HepG2 (cell line): ENCODE measurements at regions of chr22 and their contacts with region 1.

Region 1: GRCh38 chr22:23539135-23539838 is 40.8 kb downstream of the IGLL1 start:
- DNase-seq: peak; percentile 79
- ATAC-seq: peak; percentile 85
- H3K4me3 ChIP-seq: peak overlapping the region in 1 of 3 experiments; percentile 25; a peak in 2 of 6 replicates
- H3K27ac ChIP-seq: no peak overlapping the region
- H3K4me1 ChIP-seq: peaks cover 60% of the 10 kb centered on the region
- H3K27me3 ChIP-seq: 0 out of 5 replicates have a peak, but pooled peaks cover 0 to under 1% of the 10 kb centered on the region in 2 experiments
- CTCF ChIP-seq: peak; percentile 98
- EP300 ChIP-seq: no peak
- POLR2A ChIP-seq: no peak
- RAD21 ChIP-seq: peak; percentile 99

Region 2: GRCh38 chr22:23322547-23322946 is 216.7 kb before region 1 on chr22:
- CTCF ChIA-PET with region 1: no interaction called
- POLR2A ChIA-PET with region 1: no interaction called
- in situ Hi-C with region 1: no loop called
- intact Hi-C with region 1: loop called (anchors 1 kb)
- DNase-seq: peak; percentile 43
- ATAC-seq: peak; percentile 57; the same call in 2 of the 3 replicates
- H3K4me3 ChIP-seq: no peak overlapping the region
- H3K27ac ChIP-seq: no peak overlapping the region
- H3K4me1 ChIP-seq: peaks cover 6% of the 10 kb centered on the region; the same call in 1 of the 2 replicates
- H3K27me3 ChIP-seq: no peaks in the 10 kb centered on the region
- CTCF ChIP-seq: peak; percentile 55
- EP300 ChIP-seq: no peak
- POLR2A ChIP-seq: no peak
- RAD21 ChIP-seq: no peak

Region 3: GRCh38 chr22:23385291-23386244 is 153.7 kb before region 1 on chr22:
- CTCF ChIA-PET with region 1: interaction called, 3 read pairs
- POLR2A ChIA-PET with region 1: no interaction called
- in situ Hi-C with region 1: no loop called
- intact Hi-C with region 1: loop called (anchors 5 kb)
- DNase-seq: peak; percentile 59
- ATAC-seq: peak; percentile 85
- H3K4me3 ChIP-seq: no peak overlapping the region
- H3K27ac ChIP-seq: no peak overlapping the region
- H3K4me1 ChIP-seq: peaks cover 27% of the 10 kb centered on the region
- H3K27me3 ChIP-seq: peaks cover 8 to 29% of the 10 kb centered on the region in 2 experiments; a peak in 4 of 5 replicates
- CTCF ChIP-seq: peak; percentile 99
- EP300 ChIP-seq: no peak
- POLR2A ChIP-seq: no peak
- RAD21 ChIP-seq: peak; percentile 97

Region 4: DNA sequence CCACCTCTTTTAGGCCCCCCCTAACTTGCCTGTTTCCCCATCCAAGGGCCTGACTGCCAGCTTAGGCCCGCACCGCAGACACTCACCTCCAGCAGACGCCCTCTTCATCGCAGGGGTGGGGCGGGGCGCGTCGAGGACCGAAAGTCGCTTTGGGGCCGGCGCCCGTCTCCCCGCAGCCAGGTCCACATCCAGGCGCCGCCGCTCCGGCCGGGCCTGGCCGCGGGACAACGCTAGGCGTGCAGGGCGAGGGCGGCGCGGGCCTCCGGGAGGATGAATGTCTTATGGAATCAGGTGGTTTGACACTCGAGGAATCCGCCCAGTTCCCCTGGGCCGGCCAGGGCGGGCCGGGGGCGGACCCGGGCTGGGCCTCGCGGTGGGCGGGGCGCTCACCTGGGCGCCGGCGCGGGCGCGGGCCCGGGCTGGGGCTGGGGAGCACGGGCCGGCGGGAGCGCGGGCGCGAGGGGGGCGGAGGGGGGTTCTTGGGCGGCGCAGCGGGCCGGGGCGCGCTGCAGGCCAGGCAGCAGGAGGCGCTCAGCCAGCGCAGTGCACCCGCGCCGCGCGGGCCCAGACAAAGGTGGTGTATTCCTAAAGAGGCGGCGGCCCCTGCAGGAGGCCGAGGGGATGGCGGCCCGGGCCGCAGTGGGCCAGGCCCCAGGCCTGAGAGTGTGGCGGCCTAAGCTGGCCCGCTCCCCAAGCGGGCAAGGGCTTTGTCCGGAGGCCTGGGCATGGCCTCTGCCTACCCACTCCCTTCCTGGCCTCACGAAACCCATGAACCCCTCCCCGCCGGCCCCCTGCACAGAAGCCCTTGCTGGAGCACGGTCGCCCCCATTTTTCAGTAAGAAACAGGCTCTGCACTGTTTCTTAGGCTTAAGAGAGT is 136.8 kb before region 1 on chr22:
- CTCF ChIA-PET with region 1: interaction called, 21 read pairs
- POLR2A ChIA-PET with region 1: no interaction called
- in situ Hi-C with region 1: no loop called
- intact Hi-C with region 1: loop called (anchors 1 kb)
- DNase-seq: peak; percentile 67
- ATAC-seq: peak; percentile 88
- H3K4me3 ChIP-seq: peak overlapping the region in 2 of 3 experiments; percentile 47 to 58; a peak in 3 of 6 replicates
- H3K27ac ChIP-seq: no peak overlapping the region
- H3K4me1 ChIP-seq: peaks cover 9% of the 10 kb centered on the region
- H3K27me3 ChIP-seq: peaks cover 4% of the 10 kb centered on the region in 2 experiments; a peak in 4 of 5 replicates
- CTCF ChIP-seq: peak; percentile 75
- EP300 ChIP-seq: no peak
- POLR2A ChIP-seq: no peak
- RAD21 ChIP-seq: peak; percentile 92

Region 5: DNA sequence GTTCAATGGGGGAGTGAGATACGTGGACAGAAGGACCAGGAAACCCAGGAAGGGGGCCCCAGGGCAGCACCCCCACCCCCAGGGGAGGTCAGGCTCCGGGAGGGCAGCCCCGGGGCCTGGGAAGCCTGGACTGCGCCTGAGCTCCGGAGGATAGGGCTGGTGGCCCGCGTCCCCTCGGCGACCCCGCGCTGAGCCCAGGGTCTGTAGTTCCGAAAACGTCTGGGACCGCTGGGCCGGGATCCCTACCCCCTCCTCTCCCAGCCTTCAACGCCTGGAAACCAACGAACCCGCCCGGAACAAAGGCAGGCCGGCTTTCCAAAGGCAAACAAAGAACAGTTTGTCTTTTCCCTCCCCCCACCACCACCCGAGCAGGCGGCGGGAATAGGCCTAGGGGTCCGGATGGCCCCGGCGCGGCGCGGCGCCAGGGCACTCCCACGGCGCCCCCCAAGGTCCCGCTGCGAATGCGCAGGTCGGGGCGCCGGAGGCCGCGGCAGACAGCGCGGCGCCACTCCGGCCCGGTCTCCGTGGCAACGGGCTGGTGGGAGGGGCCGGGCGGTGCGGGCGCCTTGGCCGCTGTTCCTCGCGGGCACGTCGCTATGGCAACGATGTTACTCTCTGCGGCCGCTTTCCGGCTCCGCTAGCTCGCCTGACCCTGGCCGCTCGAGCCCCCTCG is 17.7 kb before region 1 on chr22:
- CTCF ChIA-PET with region 1: no interaction called
- POLR2A ChIA-PET with region 1: interaction called, 16 read pairs
- in situ Hi-C with region 1: no loop called
- intact Hi-C with region 1: no loop called
- DNase-seq: peak; percentile 97
- ATAC-seq: peak; percentile 87
- H3K4me3 ChIP-seq: peak overlapping the region; percentile 55 to 68 (median 62); a peak in 5 of 6 replicates
- H3K27ac ChIP-seq: peak overlapping the region; percentile 100
- H3K4me1 ChIP-seq: peaks cover 68% of the 10 kb centered on the region
- H3K27me3 ChIP-seq: no peaks in the 10 kb centered on the region
- CTCF ChIP-seq: peak; percentile 74
- EP300 ChIP-seq: peak; percentile 97 to 98
- POLR2A ChIP-seq: peak; percentile 49 to 72; a peak in 3 of 4 replicates
- RAD21 ChIP-seq: peak; percentile 96

Region 6: GRCh38 chr22:23591201-23591791 is 52.0 kb after region 1 on chr22:
- CTCF ChIA-PET with region 1: interaction called, 43 read pairs
- POLR2A ChIA-PET with region 1: no interaction called
- in situ Hi-C with region 1: loop called (anchors 5 kb)
- intact Hi-C with region 1: loop called (anchors 1 kb)
- DNase-seq: peak; percentile 41
- ATAC-seq: peak; percentile 92
- H3K4me3 ChIP-seq: no peak overlapping the region
- H3K27ac ChIP-seq: no peak overlapping the region
- H3K4me1 ChIP-seq: peaks cover 20% of the 10 kb centered on the region
- H3K27me3 ChIP-seq: no peaks in the 10 kb centered on the region; a peak in 2 of 5 replicates
- CTCF ChIP-seq: peak; percentile 98
- EP300 ChIP-seq: no peak
- POLR2A ChIP-seq: no peak
- RAD21 ChIP-seq: peak; percentile 88

Region 7: GRCh38 chr22:23696326-23696851 is 157.1 kb after region 1 on chr22:
- CTCF ChIA-PET with region 1: no interaction called
- POLR2A ChIA-PET with region 1: no interaction called
- in situ Hi-C with region 1: no loop called
- intact Hi-C with region 1: no loop called
- DNase-seq: no peak
- ATAC-seq: no peak
- H3K4me3 ChIP-seq: no peak overlapping the region
- H3K27ac ChIP-seq: no peak overlapping the region
- H3K4me1 ChIP-seq: peaks cover 13% of the 10 kb centered on the region
- H3K27me3 ChIP-seq: no peaks in the 10 kb centered on the region
- CTCF ChIP-seq: no peak
- EP300 ChIP-seq: no peak
- POLR2A ChIP-seq: no peak
- RAD21 ChIP-seq: no peak